ENCODE measurements at regions of chr11 and their contacts with region 1.

Region 1: DNA sequence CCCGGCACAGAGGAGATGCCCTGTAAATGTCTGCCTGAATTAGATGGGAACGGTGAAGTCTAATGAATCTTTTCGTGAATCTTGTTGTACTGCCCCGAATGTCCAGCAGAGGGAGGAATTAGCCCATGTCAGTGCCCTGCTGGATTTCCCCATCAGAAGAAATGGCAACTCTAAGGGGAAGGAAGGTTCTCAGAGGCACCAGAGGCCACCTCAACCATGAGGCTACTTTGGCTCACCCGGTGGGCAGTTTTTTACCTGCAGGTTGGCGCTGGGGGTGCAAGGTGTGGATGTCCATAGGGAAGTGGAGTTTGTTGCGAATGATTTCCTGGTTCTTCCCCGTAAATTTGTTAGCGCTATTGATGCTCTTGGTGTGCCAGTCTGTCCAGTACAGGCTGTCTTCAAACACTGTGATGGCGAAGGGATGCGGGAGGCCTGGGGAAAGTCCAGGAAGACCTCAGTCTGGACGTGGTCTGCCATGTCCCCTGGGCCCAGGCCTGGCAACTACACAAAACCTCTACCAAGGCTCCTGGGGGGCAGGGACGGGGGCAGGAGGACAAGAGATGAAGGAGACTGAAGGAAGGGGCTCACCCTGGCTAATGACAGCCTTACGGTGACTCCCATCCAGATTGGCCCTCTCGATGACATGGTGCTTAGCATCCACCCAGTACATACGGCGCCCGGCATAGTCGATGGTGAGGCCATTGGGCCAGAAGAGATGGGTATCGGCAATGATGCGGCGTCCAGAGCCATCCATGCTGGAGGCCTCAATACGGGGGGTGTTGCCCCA is 28.5 kb downstream of the LRP4 start:
- DNase-seq: peak; percentile 35 to 64
- ATAC-seq: peak; percentile 85 to 94
- H3K4me3 ChIP-seq: no peak overlapping the region
- H3K27ac ChIP-seq: no peak overlapping the region
- H3K4me1 ChIP-seq: peaks cover under 1 to 1% of the 10 kb centered on the region in 2 donors
- H3K27me3 ChIP-seq: no peaks in the 10 kb centered on the region
- CTCF ChIP-seq: peak; percentile 84 to 91 (median 86)
- POLR2A ChIP-seq: no peak

Region 2: DNA sequence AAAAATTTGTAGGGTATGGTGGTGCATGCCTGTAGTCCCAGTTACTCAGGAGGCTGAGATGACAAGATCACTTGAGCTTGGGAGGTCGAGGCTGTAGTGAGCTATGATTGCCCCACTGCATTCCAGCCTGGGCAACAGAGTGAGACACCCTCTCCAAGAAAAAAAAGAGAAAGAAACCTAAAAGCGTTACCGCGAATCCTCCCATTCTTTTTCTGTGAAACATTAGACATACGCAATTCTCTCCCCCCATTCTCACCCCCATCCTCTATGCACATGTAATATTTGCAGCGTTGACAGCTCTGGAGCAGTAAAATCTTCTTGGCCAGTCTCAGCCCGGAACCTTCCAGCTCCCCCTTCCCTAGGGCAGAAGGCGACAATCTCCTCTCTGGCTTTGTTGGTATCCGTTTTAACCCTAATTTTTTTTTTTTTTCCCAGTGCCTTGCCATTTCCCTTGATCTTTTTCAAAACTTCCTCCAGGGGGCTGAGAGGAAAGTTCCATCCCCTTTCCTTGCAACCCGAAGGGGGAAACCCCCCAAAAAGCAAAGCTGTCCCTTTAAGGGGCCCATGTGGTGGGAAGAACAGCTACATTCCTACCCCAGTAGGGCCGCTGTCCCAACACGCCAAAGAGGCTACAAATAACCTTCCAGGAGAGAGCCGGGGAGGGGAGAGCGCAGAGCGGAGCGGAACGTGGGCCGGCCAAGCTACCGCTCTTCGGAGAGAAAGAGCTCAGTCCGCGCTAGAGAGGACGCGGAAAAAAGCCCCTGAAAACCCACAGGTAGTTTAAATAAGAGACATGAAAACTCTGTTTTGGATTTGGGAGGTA is 26.6 kb after region 1 on chr11:
- in situ Hi-C with region 1: no loop called
- intact Hi-C with region 1: loop called (anchors 2 kb)
- DNase-seq: peak; percentile 45 to 72
- ATAC-seq: peak; percentile 28 to 57
- H3K4me3 ChIP-seq: peak overlapping the region; percentile 64 to 81 (median 70)
- H3K27ac ChIP-seq: peak overlapping the region; percentile 82 to 90 (median 88)
- H3K4me1 ChIP-seq: peaks cover 64 to 66% of the 10 kb centered on the region in 2 donors
- H3K27me3 ChIP-seq: no peaks in the 10 kb centered on the region
- CTCF ChIP-seq: no peak
- POLR2A ChIP-seq: peak; percentile 67 to 82

Region 3: GRCh38 chr11:47152953-47153950 is 263.4 kb after region 1 on chr11:
- in situ Hi-C with region 1: loop called (anchors 5 kb)
- intact Hi-C with region 1: loop called (anchors 1 kb)
- DNase-seq: peak; percentile 64 to 87
- ATAC-seq: peak; percentile 81
- H3K4me3 ChIP-seq: no peak overlapping the region
- H3K27ac ChIP-seq: peak overlapping the region in 3 of 4 donors; percentile 1 to 41 (median 39)
- H3K4me1 ChIP-seq: peaks cover 21 to 23% of the 10 kb centered on the region in 2 donors
- H3K27me3 ChIP-seq: no peaks in the 10 kb centered on the region
- CTCF ChIP-seq: peak; percentile 92 to 98 (median 94)
- POLR2A ChIP-seq: no peak

Region 4: GRCh38 chr11:47373876-47374720 is 484.2 kb after region 1 on chr11:
- in situ Hi-C with region 1: loop called in 2 of 4 experiments (anchors 25 kb)
- intact Hi-C with region 1: no loop called
- DNase-seq: peak; percentile 46 to 71
- ATAC-seq: peak; percentile 78 to 87
- H3K4me3 ChIP-seq: no peak overlapping the region
- H3K27ac ChIP-seq: peak overlapping the region in 2 of 4 donors; percentile 10 to 37
- H3K4me1 ChIP-seq: peaks cover 0 to 6% of the 10 kb centered on the region in 2 donors
- H3K27me3 ChIP-seq: no peaks in the 10 kb centered on the region
- CTCF ChIP-seq: peak; percentile 90 to 97 (median 93)
- POLR2A ChIP-seq: no peak